MCF 10A (cell line): ENCODE measurements at regions of chr11 and their contacts with region 1.

Region 1: GRCh38 chr11:6737872-6738466 is 33.8 kb downstream of the OR2AG2 start:
- DNase-seq: peak; percentile 60
- H3K4me3 Mint-ChIP-seq: no peak overlapping the region
- H3K27ac Mint-ChIP-seq: no peak overlapping the region
- H3K4me1 Mint-ChIP-seq: no peaks in the 10 kb centered on the region
- H3K27me3 Mint-ChIP-seq: peaks cover 33% of the 10 kb centered on the region
- CTCF ChIP-seq: peak; percentile 36

Region 2: GRCh38 chr11:6719576-6719975 is 18.4 kb before region 1 on chr11:
- CTCF ChIA-PET with region 1: interaction called, 14 read pairs
- POLR2A ChIA-PET with region 1: no interaction called
- intact Hi-C with region 1: no loop called
- DNase-seq: no peak
- H3K4me3 Mint-ChIP-seq: no peak overlapping the region
- H3K27ac Mint-ChIP-seq: no peak overlapping the region
- H3K4me1 Mint-ChIP-seq: no peaks in the 10 kb centered on the region
- H3K27me3 Mint-ChIP-seq: peaks cover 71% of the 10 kb centered on the region
- CTCF ChIP-seq: no peak